Activated CD4-positive, alpha-beta memory T cell treated with anti-CD3 and anti-CD28 coated beads, Interleukin-2, amount 10 ng/mL, durations not matched to agents 7 days and 5 days (primary cell): ENCODE measurements at regions of chr15 and their contacts with region 1.

Region 1: DNA sequence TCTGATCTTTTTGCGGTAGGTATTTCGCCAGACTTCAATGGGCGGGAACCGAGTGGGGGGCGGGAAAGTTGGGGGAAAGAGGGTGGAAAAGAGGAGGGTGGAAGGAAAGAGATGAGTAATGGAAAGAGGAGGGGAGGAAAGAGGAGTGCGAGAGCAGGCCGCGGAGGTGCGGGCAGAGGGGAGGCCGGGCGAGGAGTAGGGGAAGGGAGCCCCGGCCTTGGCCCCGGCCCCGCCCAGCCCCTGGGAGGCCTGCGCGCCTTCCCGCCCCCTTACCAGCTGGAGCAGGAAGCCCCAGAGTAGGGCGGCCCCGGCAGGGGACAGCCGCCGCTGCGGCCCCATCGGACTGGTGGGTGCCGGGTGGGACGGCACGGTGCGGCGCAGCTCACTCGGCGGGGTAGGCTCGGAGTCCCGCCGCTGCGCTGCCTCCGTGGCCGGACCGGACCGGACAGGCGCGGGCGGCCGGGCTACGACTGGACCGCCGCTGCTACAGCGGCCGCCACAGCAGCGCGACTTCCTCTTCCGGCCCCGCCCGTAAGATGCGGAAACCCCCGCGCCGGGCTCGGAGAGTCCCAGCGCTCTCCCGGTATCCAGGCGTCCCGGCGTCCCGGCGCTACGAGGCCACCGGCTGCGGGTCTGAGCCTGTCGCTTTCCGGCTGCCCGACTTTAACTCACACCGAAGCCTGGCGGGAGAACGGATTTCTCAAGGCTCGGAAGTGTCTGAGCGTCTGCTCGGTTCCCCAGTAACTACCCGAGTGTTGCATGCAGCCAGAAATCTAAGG is at the start of gene SPPL2A:
- DNase-seq: peak; percentile 90
- H3K4me3 Mint-ChIP-seq: peak within 1 kb of the TSS; percentile 80
- H3K27ac Mint-ChIP-seq: peak within 1 kb of the TSS; percentile 84
- H3K4me1 Mint-ChIP-seq: peaks cover 47% of the 10 kb centered on the region
- H3K27me3 Mint-ChIP-seq: no peaks in the 10 kb centered on the region
- total RNA-seq, gene SPPL2A: 99.9 to 102 TPM

Region 2: DNA sequence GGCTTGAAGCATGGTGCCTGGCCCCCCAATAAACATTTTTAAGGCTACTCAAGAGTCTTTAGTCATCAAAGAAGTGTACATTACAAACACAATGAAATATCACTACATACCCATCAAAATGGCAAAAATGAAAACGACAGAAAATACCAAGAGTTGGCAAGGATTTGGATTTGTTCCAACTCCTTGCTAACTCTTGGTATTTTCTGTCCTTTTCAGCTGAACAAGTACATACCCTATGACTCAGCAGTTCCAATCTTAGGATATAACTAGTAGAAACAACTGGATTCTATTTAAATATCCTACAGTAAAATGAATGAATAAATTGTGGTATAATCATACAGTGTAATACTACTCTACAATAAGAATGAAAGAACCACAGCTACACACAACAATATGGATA is 385.3 kb before region 1 on chr15:
- CTCF ChIA-PET with region 1: no interaction called
- POLR2A ChIA-PET with region 1: no interaction called
- DNase-seq: no peak
- H3K4me3 Mint-ChIP-seq: no peak overlapping the region
- H3K27ac Mint-ChIP-seq: no peak overlapping the region
- H3K4me1 Mint-ChIP-seq: peaks cover 18% of the 10 kb centered on the region
- H3K27me3 Mint-ChIP-seq: no peaks in the 10 kb centered on the region

Region 3: GRCh38 chr15:50686468-50687301 is 78.7 kb before region 1 on chr15 and contains the start of gene TRPM7:
- CTCF ChIA-PET with region 1: interaction called, 4 read pairs
- POLR2A ChIA-PET with region 1: interaction called, 19 read pairs
- DNase-seq: peak; percentile 90
- H3K4me3 Mint-ChIP-seq: peak within 1 kb of the TSS; percentile 99
- H3K27ac Mint-ChIP-seq: peak within 1 kb of the TSS; percentile 97
- H3K4me1 Mint-ChIP-seq: peaks cover 57% of the 10 kb centered on the region
- H3K27me3 Mint-ChIP-seq: no peaks in the 10 kb centered on the region
- total RNA-seq, gene TRPM7: 35.3 to 40.2 TPM

Region 4: GRCh38 chr15:50751394-50751793 is 14.0 kb before region 1 on chr15:
- CTCF ChIA-PET with region 1: interaction called, 3 read pairs
- POLR2A ChIA-PET with region 1: interaction called, 23 read pairs
- DNase-seq: no peak
- H3K4me3 Mint-ChIP-seq: no peak overlapping the region
- H3K27ac Mint-ChIP-seq: no peak overlapping the region
- H3K4me1 Mint-ChIP-seq: peaks cover 25% of the 10 kb centered on the region
- H3K27me3 Mint-ChIP-seq: no peaks in the 10 kb centered on the region

Region 5: DNA sequence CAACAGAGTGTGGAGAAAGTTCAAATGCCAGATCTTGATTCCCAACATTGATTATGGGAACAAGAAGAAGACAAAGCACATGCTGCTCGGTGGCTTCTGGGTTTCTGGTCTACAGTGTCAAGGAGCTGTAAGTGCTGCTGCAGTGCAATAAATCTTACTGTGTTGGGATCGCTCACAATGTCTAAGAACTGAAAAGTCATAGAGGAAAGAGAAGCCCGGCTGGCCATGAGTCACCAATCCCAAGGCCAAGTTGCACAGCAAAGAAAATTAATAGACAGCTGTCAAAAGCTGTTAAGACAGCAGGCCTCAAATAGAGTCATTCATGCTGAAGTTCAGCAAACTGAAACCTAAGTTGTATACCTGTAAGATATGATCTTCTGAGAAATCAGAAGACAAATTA is 33.3 kb after region 1 on chr15:
- CTCF ChIA-PET with region 1: no interaction called
- POLR2A ChIA-PET with region 1: no interaction called
- DNase-seq: no peak
- H3K4me3 Mint-ChIP-seq: no peak overlapping the region
- H3K27ac Mint-ChIP-seq: no peak overlapping the region
- H3K4me1 Mint-ChIP-seq: no peaks in the 10 kb centered on the region
- H3K27me3 Mint-ChIP-seq: no peaks in the 10 kb centered on the region

Region 6: DNA sequence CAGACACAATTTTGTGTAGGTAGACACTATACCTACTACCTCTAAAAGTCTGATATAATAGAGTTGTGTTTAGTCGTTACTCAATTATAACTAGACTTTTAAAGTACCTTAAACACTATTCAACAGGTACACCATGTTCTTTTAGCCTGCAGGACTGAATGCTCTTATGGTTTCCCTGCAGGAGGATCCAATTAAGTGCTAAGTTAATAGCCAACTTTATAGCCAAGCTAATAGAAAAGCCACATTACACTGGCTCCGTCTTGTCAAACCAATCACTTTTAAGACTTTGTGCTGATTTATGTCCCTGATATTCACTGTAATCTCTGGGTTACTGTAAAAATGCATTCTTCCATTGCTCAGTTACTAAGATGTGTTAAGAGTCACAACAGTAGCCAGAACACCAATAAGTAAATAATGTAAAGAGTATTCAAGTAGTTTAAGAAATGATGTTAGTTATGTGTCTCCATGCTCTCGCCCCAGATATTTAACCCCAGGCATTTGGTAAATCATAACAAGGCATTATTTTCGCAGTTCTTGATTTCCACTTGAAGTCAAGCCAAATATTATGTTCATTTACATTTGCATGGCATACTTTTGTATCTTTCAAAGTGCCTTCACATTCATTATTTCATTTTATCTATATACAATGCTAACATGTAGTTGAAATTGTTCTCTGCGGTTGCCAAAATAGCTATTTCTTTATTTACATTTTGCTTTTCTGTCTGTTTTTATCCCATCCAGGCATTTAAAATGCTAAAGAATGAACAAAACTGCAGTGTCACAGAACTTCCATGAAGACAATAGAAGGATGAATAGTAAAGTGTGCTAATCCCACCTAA is 100.3 kb after region 1 on chr15:
- CTCF ChIA-PET with region 1: no interaction called
- POLR2A ChIA-PET with region 1: no interaction called
- DNase-seq: no peak
- H3K4me3 Mint-ChIP-seq: no peak overlapping the region
- H3K27ac Mint-ChIP-seq: no peak overlapping the region
- H3K4me1 Mint-ChIP-seq: no peaks in the 10 kb centered on the region
- H3K27me3 Mint-ChIP-seq: peaks cover 10% of the 10 kb centered on the region

Region 7: DNA sequence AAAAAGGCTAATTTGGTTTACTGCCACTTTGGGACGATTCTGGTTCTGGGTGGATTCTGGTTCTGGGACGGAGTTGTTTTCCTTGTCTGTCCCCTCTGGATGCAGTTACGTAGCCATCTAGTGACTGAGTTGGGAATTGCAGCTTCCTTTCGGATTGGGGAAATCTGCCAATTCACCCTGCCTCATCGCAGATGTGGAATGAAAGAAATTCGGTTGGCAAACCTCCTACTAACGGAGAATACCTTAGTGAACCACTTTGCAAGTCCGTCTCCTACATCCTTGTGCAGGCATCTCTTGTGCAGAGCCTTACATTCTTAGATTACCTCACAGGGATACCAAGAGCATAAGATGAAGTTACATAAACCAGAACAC is 111.6 kb after region 1 on chr15:
- CTCF ChIA-PET with region 1: interaction called, 8 read pairs
- POLR2A ChIA-PET with region 1: interaction called, 11 read pairs
- DNase-seq: peak; percentile 71
- H3K4me3 Mint-ChIP-seq: peak overlapping the region; percentile 58
- H3K27ac Mint-ChIP-seq: peak overlapping the region; percentile 52
- H3K4me1 Mint-ChIP-seq: peaks cover 50% of the 10 kb centered on the region
- H3K27me3 Mint-ChIP-seq: peaks cover 10% of the 10 kb centered on the region

Region 8: DNA sequence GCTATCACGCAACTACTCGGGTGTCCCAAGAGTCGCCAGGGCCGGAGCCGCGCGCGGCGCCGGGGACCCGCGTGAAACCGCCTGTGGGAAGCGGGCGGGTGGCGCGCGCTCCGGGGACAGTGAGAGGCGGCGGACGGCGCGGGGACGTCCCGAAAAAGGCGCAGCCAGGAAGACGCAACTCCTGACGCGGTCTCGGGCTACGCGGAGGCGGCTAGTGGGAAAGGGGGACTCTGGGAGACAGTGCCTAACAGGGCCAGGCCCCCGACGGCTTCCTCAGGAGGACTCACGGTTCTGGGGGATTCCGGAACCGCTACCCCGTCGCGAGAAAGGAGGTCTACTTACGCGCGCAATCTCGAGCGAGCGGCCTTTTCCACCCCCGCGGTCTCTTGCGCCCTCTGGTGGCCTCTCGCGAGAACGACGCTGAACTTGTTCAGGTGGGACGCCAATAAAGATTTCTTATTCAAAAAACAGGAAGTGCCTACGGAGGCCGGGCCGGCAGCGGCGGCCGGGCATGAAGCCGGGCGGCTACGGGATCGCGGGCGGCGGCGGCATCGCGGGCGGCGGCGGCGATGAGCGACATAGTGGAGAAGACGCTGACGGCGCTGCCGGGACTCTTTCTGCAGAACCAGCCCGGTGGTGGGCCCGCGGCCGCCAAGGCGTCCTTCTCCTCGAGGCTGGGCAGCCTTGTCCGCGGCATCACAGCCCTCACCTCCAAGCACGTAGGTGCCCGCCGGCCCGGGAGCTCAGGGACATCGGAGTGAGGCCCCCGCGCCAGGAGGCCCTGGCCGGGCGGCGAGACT is 143.0 kb after region 1 on chr15 and contains the start of gene AP4E1:
- CTCF ChIA-PET with region 1: interaction called, 4 read pairs
- POLR2A ChIA-PET with region 1: interaction called, 13 read pairs
- DNase-seq: peak; percentile 95
- H3K4me3 Mint-ChIP-seq: peak within 1 kb of the TSS; percentile 96
- H3K27ac Mint-ChIP-seq: peak within 1 kb of the TSS; percentile 98
- H3K4me1 Mint-ChIP-seq: peaks cover 28% of the 10 kb centered on the region
- H3K27me3 Mint-ChIP-seq: no peaks in the 10 kb centered on the region
- total RNA-seq, gene AP4E1: 13.3 to 14.5 TPM

Region 9: GRCh38 chr15:51038166-51038963 is 273.0 kb after region 1 on chr15:
- CTCF ChIA-PET with region 1: no interaction called
- POLR2A ChIA-PET with region 1: no interaction called
- DNase-seq: no peak
- H3K4me3 Mint-ChIP-seq: no peak overlapping the region
- H3K27ac Mint-ChIP-seq: no peak overlapping the region
- H3K4me1 Mint-ChIP-seq: no peaks in the 10 kb centered on the region
- H3K27me3 Mint-ChIP-seq: peaks cover 2% of the 10 kb centered on the region